Calu3 (cell line): ENCODE measurements at regions of chr12 and their contacts with region 1.

Region 1: DNA sequence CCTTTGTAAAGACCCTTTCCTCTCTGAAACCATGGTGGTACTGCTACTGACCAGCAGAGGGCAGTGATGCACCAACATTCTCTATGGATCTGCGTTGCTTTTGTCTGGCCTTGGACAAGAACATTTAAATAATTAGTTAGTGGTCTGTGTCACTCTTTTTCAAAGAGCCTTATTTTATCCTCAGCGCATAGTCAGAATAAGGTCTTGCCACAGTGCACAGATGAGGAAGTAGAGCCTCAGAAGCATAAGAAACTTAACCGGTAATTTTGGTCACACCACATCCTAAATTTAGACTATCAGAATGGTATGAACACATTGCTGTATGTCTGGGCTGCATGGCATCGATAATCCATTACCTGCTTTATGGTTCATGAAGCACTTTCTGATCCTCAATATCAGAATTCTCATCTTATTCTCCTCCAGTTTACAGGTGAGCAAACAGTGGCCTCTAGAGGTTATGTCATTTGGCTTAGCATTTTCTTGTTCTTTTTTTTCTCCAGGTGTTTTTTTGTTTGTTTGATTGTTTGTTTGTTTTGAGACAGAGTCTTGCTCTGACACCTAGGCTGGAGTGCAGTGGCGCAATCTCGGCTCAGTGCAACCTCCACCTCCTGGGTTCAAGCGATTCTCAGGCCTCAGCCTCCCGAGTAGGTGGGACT is 23.7 kb upstream of the IFT81 start:
- DNase-seq: peak; percentile 72
- H3K4me3 Mint-ChIP-seq: no peak overlapping the region
- H3K27ac Mint-ChIP-seq: no peak overlapping the region
- H3K4me1 Mint-ChIP-seq: no peaks in the 10 kb centered on the region
- H3K27me3 Mint-ChIP-seq: peaks cover 3% of the 10 kb centered on the region
- CTCF ChIP-seq: peak; percentile 91

Region 2: DNA sequence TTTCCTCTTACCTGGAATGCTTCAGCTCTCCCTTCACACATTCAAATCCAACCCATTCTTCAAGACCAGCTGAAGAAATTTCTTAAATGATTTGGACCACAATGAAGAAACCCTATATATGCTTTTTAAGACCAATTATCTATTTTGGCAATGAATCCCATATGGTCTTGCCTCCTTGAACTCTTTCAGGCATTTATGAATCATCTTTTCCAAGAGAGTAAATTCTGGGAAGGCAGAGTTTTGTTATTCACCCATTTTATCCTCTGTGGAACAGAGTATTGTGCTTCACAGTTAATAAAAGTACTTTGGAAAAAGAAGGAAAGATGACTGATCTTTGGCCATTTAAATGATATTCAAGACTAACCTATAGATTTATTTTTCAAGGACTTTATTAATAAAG is 118.2 kb before region 1 on chr12:
- CTCF ChIA-PET with region 1: no interaction called
- intact Hi-C with region 1: no loop called
- DNase-seq: no peak
- H3K4me3 Mint-ChIP-seq: no peak overlapping the region
- H3K27ac Mint-ChIP-seq: no peak overlapping the region
- H3K4me1 Mint-ChIP-seq: no peaks in the 10 kb centered on the region
- H3K27me3 Mint-ChIP-seq: no peaks in the 10 kb centered on the region
- CTCF ChIP-seq: no peak

Region 3: DNA sequence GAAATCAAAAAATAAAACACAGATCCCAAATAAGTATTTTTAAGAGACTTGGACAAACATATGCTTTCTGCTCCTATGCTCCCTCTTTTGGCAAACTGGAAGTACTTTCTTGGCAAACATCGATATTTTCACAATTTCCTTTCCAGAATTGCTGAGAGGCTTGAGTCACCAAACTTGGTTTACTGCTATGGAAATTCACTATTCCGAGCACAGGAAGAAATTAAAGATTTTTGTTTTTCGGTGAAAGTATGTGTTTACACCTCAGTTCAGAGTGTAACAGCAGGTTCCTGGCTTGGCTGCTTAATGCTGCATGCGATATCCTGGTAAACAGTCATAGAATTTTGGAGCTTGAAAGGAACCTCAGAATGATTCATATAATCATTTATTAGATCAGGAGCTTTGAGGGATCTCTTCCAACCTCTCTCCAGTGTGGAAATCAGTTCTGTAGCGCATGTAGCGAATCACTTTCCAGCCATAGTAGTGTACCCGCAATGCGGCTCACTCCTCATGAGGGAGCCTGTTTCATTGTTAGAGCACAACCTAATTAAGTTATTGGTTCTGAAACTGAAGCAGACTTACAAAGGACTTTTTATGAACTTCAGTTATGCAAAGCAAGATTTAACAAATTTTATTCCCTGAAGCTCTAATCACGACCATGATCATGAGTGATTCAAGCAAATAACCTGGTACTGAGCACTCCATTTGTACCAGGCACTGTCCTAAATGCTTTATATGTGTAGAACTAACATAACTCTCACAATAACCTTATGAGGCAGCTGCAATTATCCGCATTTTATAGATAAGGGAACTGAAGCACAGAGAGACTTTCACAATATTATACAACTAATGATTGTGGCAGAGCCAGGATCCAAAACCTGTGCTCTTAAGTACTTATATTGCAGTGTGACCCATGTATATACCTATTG is 124.2 kb after region 1 on chr12:
- CTCF ChIA-PET with region 1: no interaction called
- intact Hi-C with region 1: loop called (anchors 1 kb)
- DNase-seq: no peak
- H3K4me3 Mint-ChIP-seq: no peak overlapping the region
- H3K27ac Mint-ChIP-seq: peak overlapping the region; percentile 15
- H3K4me1 Mint-ChIP-seq: peaks cover 17% of the 10 kb centered on the region
- H3K27me3 Mint-ChIP-seq: no peaks in the 10 kb centered on the region
- CTCF ChIP-seq: peak; percentile 47

Region 4: GRCh38 chr12:110289044-110289710 is 188.7 kb after region 1 on chr12:
- CTCF ChIA-PET with region 1: no interaction called
- intact Hi-C with region 1: loop called (anchors 2 kb)
- DNase-seq: no peak
- H3K4me3 Mint-ChIP-seq: no peak overlapping the region
- H3K27ac Mint-ChIP-seq: peak overlapping the region; percentile 18
- H3K4me1 Mint-ChIP-seq: peaks cover 34% of the 10 kb centered on the region
- H3K27me3 Mint-ChIP-seq: no peaks in the 10 kb centered on the region
- CTCF ChIP-seq: no peak

Region 5: DNA sequence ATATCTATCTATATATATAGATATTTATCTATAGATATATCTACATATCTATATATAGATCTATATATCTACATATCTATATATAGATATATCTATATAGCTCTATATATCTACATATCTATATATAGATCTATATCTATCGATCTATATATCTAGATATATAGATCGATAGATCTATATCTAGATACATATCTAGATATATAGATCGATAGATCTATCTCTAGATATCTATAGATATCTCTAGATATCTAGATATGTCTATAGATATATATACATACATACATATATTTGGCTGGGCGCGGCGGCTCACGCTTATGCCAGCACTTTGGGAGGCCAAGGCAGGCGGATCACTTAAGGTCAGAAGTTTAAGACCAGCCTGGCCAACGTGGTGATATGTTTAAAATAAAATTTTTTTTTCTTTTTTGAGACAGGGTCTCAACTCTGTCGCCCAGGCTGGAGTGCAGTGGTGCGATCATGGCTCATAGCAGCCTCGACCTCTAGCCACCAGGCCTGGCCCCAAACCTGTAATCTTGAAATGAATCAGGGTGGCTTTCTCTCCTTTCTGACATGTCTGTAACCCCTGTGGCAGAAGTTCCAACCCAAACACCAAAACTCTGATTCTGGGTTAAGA is 331.6 kb after region 1 on chr12:
- CTCF ChIA-PET with region 1: interaction called, 9 read pairs
- intact Hi-C with region 1: loop called (anchors 1 kb)
- DNase-seq: no peak
- H3K4me3 Mint-ChIP-seq: peak overlapping the region; percentile 80
- H3K27ac Mint-ChIP-seq: peak overlapping the region; percentile 72
- H3K4me1 Mint-ChIP-seq: no peaks in the 10 kb centered on the region
- H3K27me3 Mint-ChIP-seq: no peaks in the 10 kb centered on the region
- CTCF ChIP-seq: no peak